A549 (cell line): ENCODE measurements at regions of chr2 and their contacts with region 1.

Region 1: GRCh38 chr2:68441179-68441993 is 25.7 kb downstream of the FBXO48 start:
- DNase-seq: peak; percentile 48 to 88
- ATAC-seq: peak; percentile 94 to 98
- H3K4me3 ChIP-seq: no peak overlapping the region
- H3K27ac ChIP-seq: no peak overlapping the region
- H3K4me1 ChIP-seq: no peaks in the 10 kb centered on the region
- CTCF ChIP-seq: peak; percentile 98
- EP300 ChIP-seq: no peak
- POLR2A ChIP-seq: no peak
- RAD21 ChIP-seq: peak; percentile 84 to 92

Region 2: DNA sequence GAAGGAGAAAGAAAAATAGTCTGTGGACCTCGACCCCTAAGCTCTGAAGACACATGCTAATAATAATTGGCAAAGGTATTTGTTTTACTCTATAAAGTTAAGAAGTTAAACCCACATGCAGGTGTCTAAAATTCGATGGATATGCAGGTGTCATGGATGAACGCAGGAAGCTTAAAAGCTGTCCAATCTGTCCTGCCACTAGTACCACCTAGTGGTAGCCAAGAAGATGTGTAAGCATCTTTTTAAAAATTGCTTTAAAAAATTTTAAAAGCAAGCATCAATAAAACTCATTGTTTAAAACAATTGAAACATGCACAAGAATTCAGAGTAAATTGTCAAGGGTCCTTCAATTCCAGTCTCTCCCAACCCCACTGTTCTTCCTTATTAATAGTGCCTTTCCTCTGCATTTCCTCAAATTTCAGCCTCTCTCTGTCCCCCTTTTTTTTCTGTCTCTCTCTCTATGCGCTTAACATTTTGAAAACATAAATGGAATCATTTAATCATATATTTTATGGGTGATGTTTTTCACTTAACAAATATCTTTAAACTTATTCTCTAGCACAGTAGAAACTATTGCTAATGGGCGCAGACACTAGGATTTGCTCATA is 158.5 kb before region 1 on chr2:
- CTCF ChIA-PET with region 1: interaction called, 12 read pairs
- POLR2A ChIA-PET with region 1: no interaction called
- DNase-seq: peak; percentile 69 to 70
- ATAC-seq: peak; percentile 84 to 88
- H3K4me3 ChIP-seq: no peak overlapping the region
- H3K27ac ChIP-seq: no peak overlapping the region
- H3K4me1 ChIP-seq: 0 out of 3 replicates have a peak, but pooled peaks cover 3% of the 10 kb centered on the region
- CTCF ChIP-seq: peak; percentile 87
- EP300 ChIP-seq: no peak
- POLR2A ChIP-seq: no peak
- RAD21 ChIP-seq: peak; percentile 76 to 80

Region 3: GRCh38 chr2:68333009-68333408 is 108.4 kb before region 1 on chr2:
- CTCF ChIA-PET with region 1: no interaction called
- POLR2A ChIA-PET with region 1: no interaction called
- DNase-seq: no peak
- ATAC-seq: no peak
- H3K4me3 ChIP-seq: no peak overlapping the region
- H3K27ac ChIP-seq: no peak overlapping the region
- H3K4me1 ChIP-seq: no peaks in the 10 kb centered on the region
- CTCF ChIP-seq: no peak
- EP300 ChIP-seq: no peak
- POLR2A ChIP-seq: no peak
- RAD21 ChIP-seq: no peak

Region 4: DNA sequence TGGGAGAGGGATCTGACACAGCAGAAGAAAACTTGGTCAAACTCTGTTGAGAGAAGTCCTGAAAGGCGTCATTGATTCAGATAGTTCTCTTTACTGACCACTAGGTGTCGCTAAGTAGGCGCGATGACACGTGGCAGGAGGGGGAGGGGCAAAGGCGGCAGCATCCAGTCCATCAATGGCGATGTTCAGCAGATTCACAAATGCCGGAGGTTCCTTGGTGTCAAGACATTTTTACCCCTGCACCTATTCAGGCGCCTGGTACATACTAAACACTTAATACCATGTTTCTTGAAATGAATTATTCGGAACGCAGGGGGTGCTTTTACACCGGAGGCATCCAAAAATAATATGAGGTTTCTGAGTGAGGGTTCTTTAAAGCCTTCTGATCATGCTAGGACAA is 79.3 kb before region 1 on chr2:
- CTCF ChIA-PET with region 1: interaction called, 30 read pairs
- POLR2A ChIA-PET with region 1: no interaction called
- DNase-seq: peak; percentile 65 to 81
- ATAC-seq: peak; percentile 45 to 83; a peak in 4 of 6 replicates
- H3K4me3 ChIP-seq: no peak overlapping the region
- H3K27ac ChIP-seq: no peak overlapping the region
- H3K4me1 ChIP-seq: no peaks in the 10 kb centered on the region
- CTCF ChIP-seq: peak; percentile 69
- EP300 ChIP-seq: no peak
- POLR2A ChIP-seq: no peak
- RAD21 ChIP-seq: peak; percentile 68 to 83

Region 5: GRCh38 chr2:68417926-68418325 is 23.5 kb before region 1 on chr2:
- CTCF ChIA-PET with region 1: interaction called, 11 read pairs
- POLR2A ChIA-PET with region 1: no interaction called
- DNase-seq: no peak
- ATAC-seq: no peak
- H3K4me3 ChIP-seq: no peak overlapping the region
- H3K27ac ChIP-seq: no peak overlapping the region
- H3K4me1 ChIP-seq: no peaks in the 10 kb centered on the region; the same call in 2 of the 3 replicates
- CTCF ChIP-seq: no peak
- EP300 ChIP-seq: no peak
- POLR2A ChIP-seq: no peak
- RAD21 ChIP-seq: no peak

Region 6: GRCh38 chr2:68452168-68452900 is 10.9 kb after region 1 on chr2:
- CTCF ChIA-PET with region 1: interaction called, 17 read pairs
- POLR2A ChIA-PET with region 1: interaction called, 6 read pairs
- DNase-seq: no peak
- ATAC-seq: no peak
- H3K4me3 ChIP-seq: no peak overlapping the region
- H3K27ac ChIP-seq: no peak overlapping the region
- H3K4me1 ChIP-seq: no peaks in the 10 kb centered on the region
- CTCF ChIP-seq: no peak
- EP300 ChIP-seq: no peak
- POLR2A ChIP-seq: no peak
- RAD21 ChIP-seq: no peak

Region 7: DNA sequence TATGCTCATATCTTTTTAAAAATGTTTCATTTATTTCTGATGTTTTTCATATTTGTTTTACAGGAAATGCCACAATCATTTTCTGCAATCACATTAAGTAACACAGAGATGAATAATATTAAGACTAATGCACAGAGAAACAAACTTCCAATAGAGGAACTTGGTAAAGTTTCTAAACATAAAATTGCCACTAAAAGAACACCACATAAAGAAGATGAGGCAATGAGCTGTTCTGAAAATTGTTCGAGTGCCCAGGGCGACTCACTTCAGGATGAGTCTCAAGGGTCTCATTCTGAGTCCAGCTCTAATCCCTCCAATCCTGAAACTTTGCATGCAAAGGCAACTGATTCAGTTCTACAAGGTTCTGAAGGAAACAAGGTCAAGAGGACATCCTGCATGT is 96.4 kb after region 1 on chr2:
- CTCF ChIA-PET with region 1: no interaction called
- POLR2A ChIA-PET with region 1: no interaction called
- DNase-seq: no peak
- ATAC-seq: no peak
- H3K4me3 ChIP-seq: no peak overlapping the region
- H3K27ac ChIP-seq: no peak overlapping the region
- H3K4me1 ChIP-seq: no peaks in the 10 kb centered on the region
- CTCF ChIP-seq: no peak
- EP300 ChIP-seq: no peak
- POLR2A ChIP-seq: no peak
- RAD21 ChIP-seq: no peak